KBM-7 (cell line): ENCODE measurements at regions of chr1 and their contacts with region 1.

Region 1: GRCh38 chr1:6401673-6402072 is 8.1 kb upstream of the ACOT7 start:
- DNase-seq: peak; percentile 47

Region 2: DNA sequence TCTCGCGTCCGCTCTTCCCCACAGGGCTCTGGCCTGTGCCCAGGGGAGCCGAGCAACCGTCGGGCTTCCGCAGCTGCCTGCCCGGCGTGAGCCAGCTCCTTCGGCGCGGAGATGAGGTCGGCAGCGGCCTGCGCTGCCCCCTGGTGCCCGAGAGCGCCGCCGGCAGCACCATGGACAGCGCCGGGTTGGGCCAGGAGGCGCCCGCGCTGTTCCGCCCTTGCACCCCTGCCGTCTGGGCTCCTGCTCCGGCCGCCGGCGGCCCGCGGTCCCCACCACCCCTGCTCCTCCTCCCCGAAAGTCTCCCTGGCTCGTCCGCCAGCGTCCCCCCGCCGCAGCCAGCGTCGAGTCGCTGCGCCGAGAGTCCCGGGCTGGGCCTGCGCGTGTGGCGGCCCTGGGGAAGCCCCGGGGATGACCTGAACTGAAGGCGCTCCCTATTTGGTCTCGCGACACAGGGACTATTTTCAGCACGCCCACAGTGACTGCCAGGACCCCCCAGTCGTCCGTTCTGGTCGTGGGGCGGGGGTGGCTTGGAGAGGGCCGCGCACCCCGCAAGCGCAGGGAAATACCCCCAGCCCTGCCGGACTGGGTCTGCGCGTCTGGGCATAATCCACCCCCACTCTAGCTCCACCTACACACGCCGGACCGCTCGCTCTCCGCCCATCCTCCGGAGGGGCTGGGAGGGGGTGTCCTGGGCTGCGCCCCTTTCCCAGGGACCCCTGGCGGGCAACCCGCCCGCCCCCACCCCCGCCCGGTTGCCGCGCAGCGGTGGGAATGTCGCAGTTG is 156.4 kb before region 1 on chr1:
- in situ Hi-C with region 1: loop called (anchors 10 kb)
- DNase-seq: peak; percentile 88

Region 3: GRCh38 chr1:6359216-6360116 is 42.2 kb before region 1 on chr1:
- in situ Hi-C with region 1: loop called (anchors 10 kb)
- DNase-seq: peak; percentile 53